Naive thymus-derived CD4-positive, alpha-beta T cell (primary cell): ENCODE measurements at regions of chr1 and their contacts with region 1.

Region 1: GRCh38 chr1:183635606-183636333 is at the start of gene ARPC5:
- DNase-seq: peak; percentile 90 to 98 (median 92)
- ATAC-seq: peak; percentile 92
- H3K4me3 ChIP-seq: peak within 1 kb of the TSS; percentile 94
- H3K4me3 Mint-ChIP-seq: peak within 1 kb of the TSS; percentile 95 to 100 (median 100)
- H3K27ac ChIP-seq: peak within 1 kb of the TSS; percentile 80
- H3K27ac Mint-ChIP-seq: peak within 1 kb of the TSS; percentile 94 to 100 (median 99)
- H3K4me1 ChIP-seq: peaks cover 14 to 22% of the 10 kb centered on the region in 2 donors
- H3K4me1 Mint-ChIP-seq: peaks cover 15 to 50% (median 39%) of the 10 kb centered on the region in 7 donors
- H3K27me3 ChIP-seq: no peaks in the 10 kb centered on the region
- H3K27me3 Mint-ChIP-seq: peaks cover 0 to 27% (median 0%) of the 10 kb centered on the region in 5 donors
- total RNA-seq, gene ARPC5: 49.9 to 252 (median 105) TPM

Region 2: GRCh38 chr1:182614796-182615454 is 1020.8 kb before region 1 on chr1:
- CTCF ChIA-PET with region 1: no interaction called
- POLR2A ChIA-PET with region 1: no interaction called
- intact Hi-C with region 1: loop called (anchors 2 to 5 kb)
- DNase-seq: peak in 7 of 9 donors; percentile 26 to 68 (median 35)
- ATAC-seq: peak; percentile 14
- H3K4me3 ChIP-seq: peak overlapping the region; percentile 54
- H3K4me3 Mint-ChIP-seq: peak overlapping the region; percentile 74 to 87 (median 84)
- H3K27ac ChIP-seq: peak overlapping the region; percentile 15
- H3K27ac Mint-ChIP-seq: peak overlapping the region in 8 of 9 donors; percentile 74 to 95 (median 92)
- H3K4me1 ChIP-seq: peaks cover 15 to 32% of the 10 kb centered on the region in 2 donors
- H3K4me1 Mint-ChIP-seq: peaks cover 28 to 68% (median 32%) of the 10 kb centered on the region in 7 donors
- H3K27me3 ChIP-seq: no peaks in the 10 kb centered on the region
- H3K27me3 Mint-ChIP-seq: peaks cover 0 to 75% (median 30%) of the 10 kb centered on the region in 5 donors

Region 3: DNA sequence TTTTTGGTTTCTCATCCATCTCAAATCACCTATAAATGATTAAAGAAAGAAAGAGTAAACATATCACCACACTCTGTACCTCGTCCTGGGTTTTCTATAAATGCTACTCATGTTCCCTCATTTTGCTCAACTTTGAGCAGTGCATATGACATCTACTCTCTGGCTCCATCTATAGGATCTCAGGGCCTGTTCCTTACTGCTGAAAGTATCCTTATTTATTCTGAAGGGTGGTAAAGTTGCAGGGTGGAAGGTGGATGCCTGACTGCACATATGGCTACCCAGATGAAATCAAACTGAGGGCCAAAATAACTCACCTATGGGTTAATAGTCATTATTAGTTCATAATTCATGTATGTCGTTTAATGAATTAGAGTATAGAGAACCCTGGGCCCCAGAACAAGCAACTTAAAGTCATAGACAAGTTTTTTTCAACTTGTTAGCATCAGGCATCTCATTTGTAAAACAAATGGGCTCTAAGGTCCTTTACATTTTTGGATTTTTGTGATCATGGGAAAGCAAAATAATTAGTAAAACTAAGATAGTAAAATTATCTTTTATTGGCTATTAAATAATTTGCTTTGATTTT is 92.1 kb before region 1 on chr1:
- CTCF ChIA-PET with region 1: no interaction called
- POLR2A ChIA-PET with region 1: no interaction called
- intact Hi-C with region 1: loop called in 1 of 2 experiments (anchors 2 kb)
- DNase-seq: peak in 7 of 9 donors; percentile 34 to 61 (median 48)
- ATAC-seq: peak; percentile 91
- H3K4me3 ChIP-seq: no peak overlapping the region
- H3K4me3 Mint-ChIP-seq: no peak overlapping the region
- H3K27ac ChIP-seq: no peak overlapping the region
- H3K27ac Mint-ChIP-seq: peak overlapping the region in 6 of 9 donors; percentile 1 to 50 (median 4)
- H3K4me1 ChIP-seq: no peaks in the 10 kb centered on the region
- H3K4me1 Mint-ChIP-seq: peaks cover 4 to 13% (median 10%) of the 10 kb centered on the region in 7 donors
- H3K27me3 ChIP-seq: no peaks in the 10 kb centered on the region
- H3K27me3 Mint-ChIP-seq: no peaks in the 10 kb centered on the region

Region 4: DNA sequence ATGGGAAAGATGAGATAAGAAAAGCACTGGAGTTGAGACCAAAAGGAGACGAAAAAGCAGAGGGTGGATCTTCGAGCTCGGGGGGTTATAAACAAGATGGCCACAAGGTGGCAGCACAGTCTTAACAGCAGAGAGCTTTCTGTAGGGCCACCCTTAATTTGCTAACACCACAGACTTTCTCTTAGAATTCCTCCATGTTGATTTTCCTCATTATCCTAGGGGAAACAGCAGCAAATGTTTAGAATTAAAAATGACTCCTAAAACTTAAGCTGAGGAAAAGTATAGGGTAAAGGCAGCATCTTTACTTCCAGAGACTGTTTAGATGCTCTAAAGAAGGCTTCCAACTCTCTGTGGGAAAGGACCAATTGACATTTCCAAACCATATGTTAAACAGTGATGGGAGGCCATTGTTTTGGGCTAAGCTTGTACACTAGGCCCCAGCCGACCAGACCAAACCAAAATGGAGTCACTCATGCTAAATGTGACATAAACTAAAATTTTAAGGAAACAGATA is 19.8 kb after region 1 on chr1:
- CTCF ChIA-PET with region 1: interaction called, 11 read pairs
- POLR2A ChIA-PET with region 1: interaction called, 4 read pairs
- intact Hi-C with region 1: loop called (anchors 1 kb)
- DNase-seq: peak; percentile 43 to 74 (median 65)
- ATAC-seq: peak; percentile 88
- H3K4me3 ChIP-seq: no peak overlapping the region
- H3K4me3 Mint-ChIP-seq: no peak overlapping the region
- H3K27ac ChIP-seq: no peak overlapping the region
- H3K27ac Mint-ChIP-seq: peak overlapping the region in 3 of 9 donors; percentile 4 to 60 (median 19)
- H3K4me1 ChIP-seq: peaks cover 18 to 34% of the 10 kb centered on the region in 2 donors
- H3K4me1 Mint-ChIP-seq: peaks cover 22 to 48% (median 36%) of the 10 kb centered on the region in 7 donors
- H3K27me3 ChIP-seq: no peaks in the 10 kb centered on the region
- H3K27me3 Mint-ChIP-seq: peaks cover 0 to 5% (median 0%) of the 10 kb centered on the region in 5 donors

Region 5: DNA sequence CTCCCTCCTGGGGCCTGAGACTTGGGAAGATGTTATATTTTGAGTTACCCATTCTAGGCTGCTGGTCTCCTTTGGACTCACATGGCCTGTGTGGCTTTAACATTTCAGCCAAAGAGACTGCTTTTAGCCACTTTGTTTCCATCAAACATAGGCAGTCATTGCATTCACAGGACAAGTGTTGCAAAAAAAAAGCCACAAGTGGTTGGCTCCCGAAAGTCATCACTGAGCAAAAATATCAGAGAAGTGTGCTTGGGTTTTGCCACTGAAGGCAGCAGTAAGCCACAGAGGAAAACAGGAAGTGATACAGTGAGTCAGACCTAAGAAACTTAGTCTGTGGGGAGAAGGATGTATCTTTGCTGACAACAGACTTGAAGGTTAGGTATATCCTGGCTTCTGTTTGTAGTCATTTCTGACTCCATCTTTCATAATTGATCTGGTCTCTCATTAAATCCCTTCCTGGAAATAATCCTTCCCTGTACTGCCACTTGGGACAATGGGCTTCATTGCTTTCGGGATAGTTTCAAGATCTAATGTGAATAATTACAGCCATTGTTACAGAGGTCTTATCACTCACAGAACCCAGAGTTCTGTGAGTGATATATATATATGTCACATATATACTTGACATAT is 320.9 kb after region 1 on chr1:
- CTCF ChIA-PET with region 1: no interaction called
- POLR2A ChIA-PET with region 1: no interaction called
- intact Hi-C with region 1: loop called (anchors 1 kb)
- DNase-seq: peak in 8 of 9 donors; percentile 60 to 82 (median 71)
- ATAC-seq: peak; percentile 99
- H3K4me3 ChIP-seq: no peak overlapping the region
- H3K4me3 Mint-ChIP-seq: peak overlapping the region in 8 of 10 donors; percentile 10 to 76 (median 30)
- H3K27ac ChIP-seq: peak overlapping the region; percentile 15
- H3K27ac Mint-ChIP-seq: no peak overlapping the region
- H3K4me1 ChIP-seq: peaks cover 17 to 36% of the 10 kb centered on the region in 2 donors
- H3K4me1 Mint-ChIP-seq: peaks cover 0 to 13% (median 9%) of the 10 kb centered on the region in 7 donors
- H3K27me3 ChIP-seq: no peaks in the 10 kb centered on the region
- H3K27me3 Mint-ChIP-seq: no peaks in the 10 kb centered on the region

Region 6: DNA sequence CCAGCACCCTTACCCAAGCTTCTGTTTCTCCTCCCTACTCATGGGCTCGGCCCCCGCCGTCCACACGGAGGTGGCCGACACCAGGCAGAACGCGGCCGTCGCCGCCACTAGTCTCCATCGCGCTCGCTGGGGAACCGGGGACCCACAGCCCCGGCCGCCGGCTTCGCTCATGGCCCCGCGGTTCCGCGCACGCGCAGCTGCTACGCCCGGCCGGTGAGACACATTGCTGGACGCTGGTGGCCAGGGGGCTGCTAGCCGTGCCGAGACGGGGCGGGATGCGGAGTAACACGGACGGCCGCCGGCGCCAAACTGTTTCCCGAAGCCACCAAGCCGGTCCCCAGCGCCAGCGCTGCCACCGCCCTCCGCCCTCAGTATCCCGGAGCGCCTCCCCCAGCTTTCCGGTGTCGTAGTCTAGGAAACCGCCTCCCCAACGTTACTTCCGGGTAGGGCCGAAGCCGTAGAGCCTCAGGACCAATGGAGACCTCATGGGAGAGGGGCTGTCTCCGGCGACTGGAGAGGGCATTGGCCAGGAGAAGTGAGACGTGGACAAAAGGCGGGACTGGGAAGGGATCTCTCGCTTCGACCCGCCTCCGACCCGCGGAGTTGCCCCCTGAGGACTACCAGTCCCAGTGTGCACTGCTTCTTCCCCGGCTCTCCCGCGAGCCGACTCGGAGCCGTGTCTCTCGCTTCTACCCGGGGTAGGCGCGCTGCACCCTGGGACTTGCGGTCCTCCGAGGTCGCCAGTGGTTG is 1118.9 kb after region 1 on chr1 and contains the start of gene EDEM3:
- CTCF ChIA-PET with region 1: interaction called, 3 read pairs
- POLR2A ChIA-PET with region 1: no interaction called
- intact Hi-C with region 1: loop called (anchors 1 to 2 kb)
- DNase-seq: peak; percentile 86 to 100 (median 99)
- ATAC-seq: peak; percentile 96
- H3K4me3 ChIP-seq: peak within 1 kb of the TSS; percentile 84
- H3K4me3 Mint-ChIP-seq: peak within 1 kb of the TSS; percentile 87 to 96 (median 94)
- H3K27ac ChIP-seq: peak within 1 kb of the TSS; percentile 91
- H3K27ac Mint-ChIP-seq: peak within 1 kb of the TSS; percentile 71 to 97 (median 93)
- H3K4me1 ChIP-seq: peaks cover 9 to 13% of the 10 kb centered on the region in 2 donors
- H3K4me1 Mint-ChIP-seq: peaks cover 21 to 50% (median 46%) of the 10 kb centered on the region in 7 donors
- H3K27me3 ChIP-seq: no peaks in the 10 kb centered on the region
- H3K27me3 Mint-ChIP-seq: peaks cover 0 to 13% (median 0%) of the 10 kb centered on the region in 5 donors
- total RNA-seq, gene EDEM3: 21.0 to 55.9 (median 33.9) TPM